Dorsolateral prefrontal cortex (tissue), 120 donors: ENCODE measurements at regions of chr5 and their contacts with region 1.

Region 1: GRCh38 chr5:179986328-179986727 is 78.6 kb upstream of the TBC1D9B start:
- DNase-seq: no peak
- H3K4me3 ChIP-seq: no peak overlapping the region
- H3K27ac ChIP-seq: peak overlapping the region in 11 of 59 donors; percentile 5 to 49 (median 35)
- H3K27me3 ChIP-seq: no peaks in the 10 kb centered on the region
- CTCF ChIP-seq: peak in 49 of 56 donors; percentile 12 to 70 (median 44)

Region 2: DNA sequence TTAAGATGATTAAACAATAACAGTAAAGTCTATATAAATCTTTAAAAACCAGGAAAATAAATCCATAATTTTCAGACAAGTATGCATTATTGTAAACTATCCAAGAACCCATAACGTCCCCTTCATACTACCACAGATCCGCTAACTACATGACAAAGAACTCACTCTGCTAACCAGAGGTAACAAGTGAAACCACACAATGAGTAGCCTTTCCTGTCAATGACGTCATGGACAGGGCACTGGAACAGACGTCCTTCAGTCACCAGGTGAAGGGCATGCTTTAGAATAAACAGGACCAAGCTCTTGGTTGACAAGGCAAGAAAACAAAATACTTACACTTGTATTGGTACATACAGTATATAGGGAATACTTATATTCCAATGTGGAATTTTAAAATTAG is 40.0 kb after region 1 on chr5:
- intact Hi-C with region 1: loop called in 1 of 2 experiments (anchors 5 kb)
- DNase-seq: no peak
- H3K4me3 ChIP-seq: peak overlapping the region in 1 of 59 donors; percentile 7
- H3K27ac ChIP-seq: peak overlapping the region in 46 of 59 donors; percentile 3 to 76 (median 53)
- H3K27me3 ChIP-seq: no peaks in the 10 kb centered on the region
- CTCF ChIP-seq: no peak

Region 3: DNA sequence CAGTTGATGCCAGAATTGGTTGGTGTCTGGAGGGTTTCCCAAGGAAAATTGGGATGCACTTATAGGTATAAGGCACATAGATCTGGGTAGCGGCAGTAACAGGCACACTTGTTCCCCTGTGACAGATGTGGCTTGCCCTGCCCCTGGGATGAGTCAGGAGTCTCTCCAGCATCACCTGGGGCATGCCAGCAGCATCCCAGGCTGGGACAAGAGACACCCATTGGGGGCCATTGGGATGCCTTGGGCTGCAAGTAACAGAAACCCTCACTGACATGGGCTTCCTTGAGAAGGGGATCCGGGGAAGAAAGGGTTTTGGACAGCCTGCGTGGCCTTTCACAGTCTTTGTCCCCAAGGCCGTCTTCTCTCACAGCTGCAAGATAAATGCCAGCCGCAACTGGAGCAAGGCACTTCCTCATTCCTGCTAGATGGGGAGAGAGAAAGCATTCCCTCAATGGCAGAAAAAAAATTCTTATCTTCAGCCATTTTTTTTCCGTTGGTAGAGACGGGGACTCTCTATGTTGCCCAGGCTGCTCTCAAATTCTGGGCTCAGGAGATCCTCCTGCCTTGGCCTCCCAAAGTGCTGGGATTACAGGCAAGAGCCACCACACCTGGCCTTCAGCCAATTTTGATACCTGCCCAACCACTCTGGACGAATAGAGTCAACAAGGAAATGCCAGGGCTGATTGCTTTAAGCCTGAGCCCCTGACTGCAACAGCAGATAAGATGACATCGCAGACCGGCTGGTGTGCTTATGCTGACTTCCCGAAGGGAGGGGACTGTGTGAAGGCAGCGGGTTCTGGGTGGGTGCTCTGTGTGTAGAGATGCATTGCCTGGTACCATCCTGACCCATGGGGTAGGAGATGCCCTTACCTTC is 98.6 kb after region 1 on chr5:
- intact Hi-C with region 1: loop called (anchors 2 to 5 kb)
- DNase-seq: no peak
- H3K4me3 ChIP-seq: peak overlapping the region in 2 of 59 donors; percentile 11 to 50
- H3K27ac ChIP-seq: peak overlapping the region in 30 of 59 donors; percentile 1 to 89 (median 72)
- H3K27me3 ChIP-seq: peaks cover 0 to 4% (median 0%) of the 10 kb centered on the region in 45 donors
- CTCF ChIP-seq: no peak

Region 4: DNA sequence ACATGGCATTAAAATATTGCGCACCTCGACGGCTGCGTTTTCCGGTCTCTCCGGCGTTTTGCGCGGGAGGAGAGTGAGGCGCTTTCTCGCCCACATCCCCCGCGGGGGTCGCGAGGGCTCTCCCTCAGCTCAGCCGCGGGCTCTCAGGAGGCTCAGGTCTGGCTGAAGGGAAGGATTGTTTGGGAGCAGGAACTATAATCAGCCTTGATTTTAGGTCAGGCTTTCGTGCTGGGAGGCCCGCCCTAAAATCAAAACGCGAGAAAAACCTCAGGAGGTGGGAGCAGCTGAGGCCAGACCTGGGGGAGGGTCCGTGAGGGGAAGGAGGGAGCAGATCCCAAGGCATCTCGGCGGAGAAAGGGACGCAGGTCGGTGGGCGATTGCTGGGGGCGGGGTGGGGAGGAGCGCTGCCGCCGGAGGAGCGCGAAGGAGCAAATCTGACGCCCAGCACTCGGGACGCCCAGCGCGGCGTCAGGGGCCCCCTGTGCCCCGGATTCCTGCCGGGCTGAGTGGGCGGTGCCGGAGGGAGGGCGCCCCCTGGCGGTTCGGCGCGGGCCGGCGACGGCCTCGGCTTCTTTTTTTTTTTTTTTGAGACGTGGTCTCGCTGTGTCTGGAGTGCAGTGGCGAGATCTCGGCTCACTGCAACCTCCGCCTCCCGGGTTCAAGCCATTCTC is 103.9 kb after region 1 on chr5:
- intact Hi-C with region 1: loop called (anchors 2 to 5 kb)
- DNase-seq: peak in 7 of 10 donors; percentile 20 to 82 (median 63)
- H3K4me3 ChIP-seq: peak overlapping the region; percentile 43 to 78 (median 63)
- H3K27ac ChIP-seq: peak overlapping the region in 52 of 59 donors; percentile 16 to 88 (median 70)
- H3K27me3 ChIP-seq: no peaks in the 10 kb centered on the region
- CTCF ChIP-seq: peak; percentile 66 to 97 (median 90)